K562 (cell line): ENCODE measurements at regions of chr10 and their contacts with region 1.

Region 1: DNA sequence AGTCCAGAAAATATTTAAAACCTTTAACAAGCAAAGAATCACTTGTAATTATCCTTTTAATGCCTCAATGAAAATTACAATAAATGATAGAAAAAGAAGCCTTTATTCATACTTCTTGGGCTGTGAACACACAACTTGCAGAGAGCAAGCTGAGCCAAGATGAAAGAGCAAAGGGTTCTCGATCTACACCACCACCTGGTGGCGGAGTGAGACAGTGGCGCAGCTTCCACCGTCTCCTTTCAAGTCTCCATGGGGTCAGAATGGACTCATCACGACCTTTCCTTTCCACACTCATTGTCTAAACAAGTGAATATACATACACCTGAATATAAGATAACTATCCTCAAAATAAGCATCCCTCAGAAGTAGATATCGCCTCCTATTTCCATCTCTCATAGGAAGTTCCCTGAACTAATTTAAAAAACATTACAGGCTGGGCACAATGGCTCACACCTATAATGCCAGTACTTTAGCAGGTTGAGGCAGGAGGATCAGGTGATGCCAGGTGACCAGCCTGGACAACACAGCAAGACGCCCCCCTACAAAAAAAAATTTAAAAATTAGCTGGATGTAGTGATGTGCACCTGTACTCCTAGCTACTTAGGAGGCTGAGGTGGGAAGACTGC is 40.7 kb downstream of the ATE1 start:
- DNase-seq: peak; percentile 39 to 65 (median 48)
- ATAC-seq: peak; percentile 96
- H3K4me3 ChIP-seq: no peak overlapping the region
- H3K27ac ChIP-seq: no peak overlapping the region
- H3K4me1 ChIP-seq: no peaks in the 10 kb centered on the region
- H3K27me3 ChIP-seq: no peaks in the 10 kb centered on the region
- CTCF ChIP-seq: peak; percentile 69 to 81 (median 70)
- EP300 ChIP-seq: no peak
- POLR2A ChIP-seq: no peak
- RAD21 ChIP-seq: peak; percentile 60 to 76

Region 2: DNA sequence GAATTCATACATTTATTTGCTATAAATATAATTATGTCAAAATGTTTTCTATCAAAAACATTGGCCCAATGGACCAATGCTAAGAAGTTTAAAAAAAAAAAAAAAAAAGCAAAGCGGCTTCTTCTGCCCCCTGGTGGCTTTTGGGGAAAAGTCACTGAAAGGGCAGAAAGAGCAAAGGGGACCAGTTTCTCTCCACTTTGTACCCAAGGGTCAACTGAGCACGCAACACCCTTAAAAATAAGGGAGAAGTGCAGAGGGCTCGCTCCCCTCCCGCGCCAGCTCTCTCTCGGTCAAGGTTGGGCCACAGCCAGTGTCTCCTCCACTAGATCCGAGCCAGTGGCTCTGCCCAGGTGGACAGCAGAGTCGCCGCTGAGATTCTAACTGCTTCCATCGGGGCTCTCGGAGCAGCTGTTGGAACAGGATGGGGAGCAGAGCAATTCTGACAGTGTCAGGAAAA is 152.5 kb before region 1 on chr10:
- CTCF ChIA-PET with region 1: no interaction called
- POLR2A ChIA-PET with region 1: no interaction called
- in situ Hi-C with region 1: no loop called
- intact Hi-C with region 1: loop called (anchors 10 kb)
- DNase-seq: peak; percentile 27 to 32 (median 30)
- ATAC-seq: peak; percentile 45; the same call in 2 of the 3 replicates
- H3K4me3 ChIP-seq: no peak overlapping the region
- H3K27ac ChIP-seq: no peak overlapping the region
- H3K4me1 ChIP-seq: peaks cover 3% of the 10 kb centered on the region in 2 experiments; a peak in 3 of 5 replicates
- H3K27me3 ChIP-seq: peaks cover 2 to 29% of the 10 kb centered on the region in 2 experiments
- CTCF ChIP-seq: peak; percentile 49 to 63 (median 58)
- EP300 ChIP-seq: no peak
- POLR2A ChIP-seq: no peak
- RAD21 ChIP-seq: no peak

Region 3: GRCh38 chr10:121823993-121824463 is 63.1 kb before region 1 on chr10:
- CTCF ChIA-PET with region 1: interaction called, 4 read pairs
- POLR2A ChIA-PET with region 1: no interaction called
- in situ Hi-C with region 1: no loop called
- intact Hi-C with region 1: loop called (anchors 1 kb)
- DNase-seq: peak; percentile 24 to 34 (median 29)
- ATAC-seq: peak; percentile 67; the same call in 2 of the 3 replicates
- H3K4me3 ChIP-seq: no peak overlapping the region
- H3K27ac ChIP-seq: no peak overlapping the region
- H3K4me1 ChIP-seq: no peaks in the 10 kb centered on the region
- H3K27me3 ChIP-seq: no peaks in the 10 kb centered on the region
- CTCF ChIP-seq: peak in 2 of 3 experiments; percentile 57 to 61; a peak in 5 of 6 replicates
- EP300 ChIP-seq: no peak
- POLR2A ChIP-seq: no peak
- RAD21 ChIP-seq: peak in 1 of 2 experiments; percentile 60; a peak in 3 of 4 replicates